IMR-90 (cell line): ENCODE measurements at regions of chr10 and their contacts with region 1.

Region 1: GRCh38 chr10:115706026-115706781 is 566.8 kb downstream of the GFRA1 start:
- DNase-seq: peak; percentile 30
- ATAC-seq: peak; percentile 77
- H3K4me3 ChIP-seq: no peak overlapping the region
- H3K27ac ChIP-seq: no peak overlapping the region
- H3K4me1 ChIP-seq: no peaks in the 10 kb centered on the region
- H3K27me3 ChIP-seq: no peaks in the 10 kb centered on the region
- CTCF ChIP-seq: peak; percentile 64
- POLR2A ChIP-seq: no peak
- RAD21 ChIP-seq: peak; percentile 54

Region 2: DNA sequence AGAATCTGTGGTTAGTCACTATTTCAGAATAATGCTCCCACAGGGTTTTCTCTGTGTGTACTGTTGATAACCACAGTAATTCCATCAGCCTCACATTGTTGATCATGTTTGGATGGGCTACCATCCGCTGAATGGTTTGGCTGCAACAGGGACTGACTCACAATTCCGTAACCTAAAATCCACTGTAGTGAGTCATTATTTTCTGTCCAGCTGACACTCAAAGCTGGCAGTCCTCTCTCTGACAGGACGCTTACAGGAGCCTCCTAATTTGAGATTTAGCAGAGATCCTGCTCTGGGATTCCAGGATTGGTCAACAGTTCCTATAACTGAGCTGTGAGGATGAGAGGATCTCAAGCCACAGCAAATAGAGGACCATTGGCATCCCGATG is 1434.4 kb before region 1 on chr10:
- CTCF ChIA-PET with region 1: no interaction called
- POLR2A ChIA-PET with region 1: no interaction called
- dilution Hi-C with region 1: no loop called
- in situ Hi-C with region 1: no loop called
- intact Hi-C with region 1: no loop called
- DNase-seq: peak; percentile 95
- ATAC-seq: peak; percentile 94
- H3K4me3 ChIP-seq: no peak overlapping the region
- H3K27ac ChIP-seq: no peak overlapping the region
- H3K4me1 ChIP-seq: peaks cover 6% of the 10 kb centered on the region
- H3K27me3 ChIP-seq: peaks cover 8% of the 10 kb centered on the region
- CTCF ChIP-seq: no peak
- POLR2A ChIP-seq: no peak
- RAD21 ChIP-seq: no peak

Region 3: DNA sequence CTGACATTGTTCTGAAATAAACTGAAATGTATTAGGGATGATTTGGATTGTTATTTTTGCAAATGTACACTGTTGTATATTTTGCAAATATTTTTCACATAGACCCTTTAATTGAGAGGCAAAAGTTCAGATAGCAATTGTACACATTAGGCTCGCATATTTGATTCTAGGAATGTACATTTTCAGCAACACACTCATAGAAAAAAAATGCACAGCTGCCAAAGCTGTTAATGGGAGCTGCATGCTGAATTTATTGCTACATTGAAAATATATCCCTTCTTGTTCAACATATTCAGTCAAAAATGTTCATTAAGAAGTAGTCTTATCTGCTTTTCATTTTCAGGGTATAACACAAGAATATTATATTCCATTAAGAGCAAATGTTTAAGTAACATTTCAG is 100.1 kb before region 1 on chr10:
- CTCF ChIA-PET with region 1: no interaction called
- POLR2A ChIA-PET with region 1: no interaction called
- dilution Hi-C with region 1: no loop called
- in situ Hi-C with region 1: no loop called
- intact Hi-C with region 1: no loop called
- DNase-seq: no peak
- ATAC-seq: no peak
- H3K4me3 ChIP-seq: no peak overlapping the region
- H3K27ac ChIP-seq: no peak overlapping the region
- H3K4me1 ChIP-seq: no peaks in the 10 kb centered on the region
- H3K27me3 ChIP-seq: no peaks in the 10 kb centered on the region
- CTCF ChIP-seq: no peak
- POLR2A ChIP-seq: no peak
- RAD21 ChIP-seq: no peak

Region 4: GRCh38 chr10:115795964-115796363 is 89.8 kb after region 1 on chr10:
- CTCF ChIA-PET with region 1: interaction called, 3 read pairs
- POLR2A ChIA-PET with region 1: no interaction called
- dilution Hi-C with region 1: no loop called
- in situ Hi-C with region 1: no loop called
- intact Hi-C with region 1: loop called (anchors 5 kb)
- DNase-seq: no peak
- ATAC-seq: no peak
- H3K4me3 ChIP-seq: no peak overlapping the region
- H3K27ac ChIP-seq: no peak overlapping the region
- H3K4me1 ChIP-seq: no peaks in the 10 kb centered on the region
- H3K27me3 ChIP-seq: no peaks in the 10 kb centered on the region
- CTCF ChIP-seq: no peak
- POLR2A ChIP-seq: no peak
- RAD21 ChIP-seq: no peak

Region 5: DNA sequence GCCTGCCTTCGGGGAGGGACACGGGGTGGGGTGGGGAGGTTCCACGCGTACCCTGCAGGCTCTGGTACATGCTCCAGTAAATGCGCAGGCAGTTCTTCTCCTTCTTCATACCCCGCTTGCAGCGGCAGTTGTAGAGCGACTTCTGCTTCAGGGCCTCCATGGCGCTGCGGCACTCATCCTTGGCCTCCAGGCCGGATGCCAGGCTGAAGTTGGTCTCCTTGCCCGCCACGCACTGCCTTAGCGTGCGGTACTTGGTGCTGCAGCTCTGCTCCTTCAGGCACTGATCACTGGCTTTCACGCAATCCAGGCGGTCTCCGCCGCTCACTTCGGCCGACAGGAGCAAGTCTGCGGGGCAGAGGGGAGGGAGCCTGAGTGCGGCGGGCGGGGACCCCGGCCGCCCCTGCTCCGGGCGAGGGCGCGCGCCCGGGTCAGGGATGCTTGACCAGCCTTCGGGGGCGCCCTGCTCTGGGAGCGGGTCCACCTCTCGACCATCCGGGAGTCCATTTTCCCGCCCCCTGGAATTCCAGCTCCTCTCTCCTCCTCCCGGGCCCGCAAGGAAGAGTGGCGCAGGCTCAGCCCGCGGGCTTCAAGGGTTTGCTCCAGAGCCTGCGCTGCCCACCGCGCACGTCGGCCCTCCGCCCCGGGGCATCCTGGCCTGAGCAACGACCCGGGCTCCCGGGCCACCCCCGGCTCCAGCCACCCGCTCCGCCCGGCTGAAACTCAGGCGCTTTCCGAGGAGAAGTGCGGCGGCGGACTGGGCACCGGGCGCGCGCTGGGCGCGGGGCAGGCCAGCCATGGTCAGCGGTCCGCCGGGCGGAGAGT is 564.8 kb after region 1 on chr10:
- CTCF ChIA-PET with region 1: no interaction called
- POLR2A ChIA-PET with region 1: no interaction called
- dilution Hi-C with region 1: no loop called
- in situ Hi-C with region 1: no loop called
- intact Hi-C with region 1: no loop called
- DNase-seq: peak; percentile 4
- ATAC-seq: peak; percentile 22
- H3K4me3 ChIP-seq: peak overlapping the region; percentile 47
- H3K27ac ChIP-seq: no peak overlapping the region
- H3K4me1 ChIP-seq: no peaks in the 10 kb centered on the region; the same call in 1 of the 2 replicates
- H3K27me3 ChIP-seq: peaks cover 50% of the 10 kb centered on the region
- CTCF ChIP-seq: no peak
- POLR2A ChIP-seq: no peak
- RAD21 ChIP-seq: no peak